IMR-90 (cell line): ENCODE measurements at regions of chr19 and their contacts with region 1.

Region 1: GRCh38 chr19:41366089-41366488 is 2.1 kb upstream of the B9D2 start:
- DNase-seq: no peak
- ATAC-seq: no peak
- H3K4me3 ChIP-seq: no peak overlapping the region
- H3K27ac ChIP-seq: peak overlapping the region; percentile 6; the same call in 1 of the 2 replicates
- H3K4me1 ChIP-seq: peaks cover 15% of the 10 kb centered on the region
- H3K27me3 ChIP-seq: no peaks in the 10 kb centered on the region
- CTCF ChIP-seq: 0 out of 2 replicates have a peak, but pooled peaks have one; percentile 12
- POLR2A ChIP-seq: no peak
- RAD21 ChIP-seq: no peak

Region 2: DNA sequence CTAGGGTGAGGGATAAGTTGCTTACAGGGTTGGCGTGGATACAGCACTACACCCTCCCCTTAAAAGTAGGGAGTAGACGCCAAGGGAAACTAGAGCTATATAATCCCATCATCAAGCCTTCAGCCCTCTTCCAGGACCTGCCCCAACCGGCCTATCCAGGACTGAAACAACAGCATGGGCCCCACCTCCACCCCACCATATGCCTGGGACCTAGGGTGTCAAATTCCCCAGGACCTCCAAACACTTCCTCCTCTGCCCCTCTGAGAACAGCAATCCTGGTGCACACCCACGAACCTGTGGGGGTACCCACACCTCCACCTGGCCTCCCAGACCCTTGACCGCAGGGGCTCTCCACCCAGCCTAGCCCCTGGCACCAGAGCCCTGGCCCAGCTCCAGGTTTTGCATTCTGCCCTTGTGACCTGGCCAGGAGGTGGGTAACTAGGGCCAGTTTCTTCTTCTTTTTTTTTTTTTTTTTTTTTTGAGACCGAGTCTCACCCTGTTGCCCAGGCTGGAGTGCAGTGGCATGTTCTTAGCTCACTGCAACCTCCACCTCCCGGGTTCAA is 253.3 kb before region 1 on chr19:
- CTCF ChIA-PET with region 1: no interaction called
- POLR2A ChIA-PET with region 1: interaction called, 13 read pairs
- dilution Hi-C with region 1: no loop called
- in situ Hi-C with region 1: no loop called
- intact Hi-C with region 1: no loop called
- DNase-seq: no peak
- ATAC-seq: no peak
- H3K4me3 ChIP-seq: no peak overlapping the region
- H3K27ac ChIP-seq: no peak overlapping the region
- H3K4me1 ChIP-seq: no peaks in the 10 kb centered on the region
- H3K27me3 ChIP-seq: peaks cover 5% of the 10 kb centered on the region; the same call in 1 of the 2 replicates
- CTCF ChIP-seq: no peak
- POLR2A ChIP-seq: no peak
- RAD21 ChIP-seq: no peak

Region 3: GRCh38 chr19:41341669-41342490 is 24.2 kb before region 1 on chr19:
- CTCF ChIA-PET with region 1: no interaction called
- POLR2A ChIA-PET with region 1: no interaction called
- dilution Hi-C with region 1: no loop called
- in situ Hi-C with region 1: no loop called
- intact Hi-C with region 1: no loop called
- DNase-seq: no peak
- ATAC-seq: no peak
- H3K4me3 ChIP-seq: no peak overlapping the region
- H3K27ac ChIP-seq: no peak overlapping the region
- H3K4me1 ChIP-seq: no peaks in the 10 kb centered on the region
- H3K27me3 ChIP-seq: no peaks in the 10 kb centered on the region
- CTCF ChIP-seq: no peak
- POLR2A ChIP-seq: no peak
- RAD21 ChIP-seq: no peak